H1 (cell line): ENCODE measurements at regions of chr17 and their contacts with region 1.

Region 1: DNA sequence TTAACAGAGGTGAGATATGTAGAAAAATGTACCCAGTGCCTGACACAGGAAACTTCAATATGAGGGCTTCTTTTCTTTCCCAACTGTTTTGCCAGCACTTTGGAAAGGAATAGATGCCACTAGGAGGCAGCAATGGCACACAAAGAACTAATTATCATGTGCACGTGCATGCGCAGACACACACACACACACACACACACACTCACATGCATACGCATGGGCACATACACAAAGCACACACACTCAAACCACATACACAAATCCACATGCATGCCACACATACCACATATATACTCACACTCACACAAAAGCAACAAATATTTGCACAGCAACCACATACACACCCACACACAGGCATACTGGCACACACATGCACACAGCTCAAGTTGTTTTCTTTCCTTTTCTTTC is 8.8 kb upstream of the CEP112 start:
- DNase-seq: peak in 1 of 2 experiments; percentile 52
- H3K4me3 ChIP-seq: no peak overlapping the region
- H3K27ac ChIP-seq: no peak overlapping the region
- H3K4me1 ChIP-seq: no peaks in the 10 kb centered on the region
- H3K27me3 ChIP-seq: no peaks in the 10 kb centered on the region; a peak in 1 of 7 replicates
- CTCF ChIP-seq: peak; percentile 3 to 83 (median 60)
- EP300 ChIP-seq: no peak
- POLR2A ChIP-seq: no peak
- RAD21 ChIP-seq: peak; percentile 87

Region 2: DNA sequence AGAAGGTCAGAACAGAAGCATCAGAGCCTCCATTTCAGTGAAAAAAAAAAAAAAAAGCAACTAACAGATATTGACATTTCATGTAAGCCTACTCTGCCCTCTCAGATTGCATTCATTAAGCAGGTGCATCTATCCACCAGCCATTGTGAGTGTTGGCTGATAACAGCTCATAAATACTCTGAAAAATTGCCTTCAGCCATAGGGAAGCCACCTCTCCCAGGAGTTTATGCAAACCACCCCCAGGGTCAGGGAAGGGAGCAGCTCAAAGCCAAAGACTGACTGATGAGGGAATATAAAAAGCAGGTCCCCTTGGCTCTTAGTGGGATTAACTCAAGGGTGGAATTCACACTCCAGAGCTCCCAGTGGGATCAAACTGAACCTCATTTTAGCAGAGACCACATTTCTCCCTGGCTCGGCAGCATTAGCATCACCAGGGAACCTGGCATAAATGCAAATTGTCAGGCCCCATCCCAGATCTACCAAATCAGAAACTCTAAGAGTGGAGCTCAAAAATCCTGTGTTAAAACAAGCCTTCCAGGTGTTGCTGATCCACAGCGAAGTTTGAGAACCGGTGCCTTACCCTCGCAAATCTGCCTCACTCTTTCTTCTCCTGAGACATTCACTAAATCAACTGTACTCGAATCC is 14.3 kb after region 1 on chr17:
- CTCF ChIA-PET with region 1: interaction called, 64 read pairs
- POLR2A ChIA-PET with region 1: no interaction called
- DNase-seq: no peak
- H3K4me3 ChIP-seq: no peak overlapping the region
- H3K27ac ChIP-seq: no peak overlapping the region
- H3K4me1 ChIP-seq: no peaks in the 10 kb centered on the region
- H3K27me3 ChIP-seq: no peaks in the 10 kb centered on the region
- CTCF ChIP-seq: no peak
- EP300 ChIP-seq: no peak
- POLR2A ChIP-seq: no peak
- RAD21 ChIP-seq: no peak

Region 3: DNA sequence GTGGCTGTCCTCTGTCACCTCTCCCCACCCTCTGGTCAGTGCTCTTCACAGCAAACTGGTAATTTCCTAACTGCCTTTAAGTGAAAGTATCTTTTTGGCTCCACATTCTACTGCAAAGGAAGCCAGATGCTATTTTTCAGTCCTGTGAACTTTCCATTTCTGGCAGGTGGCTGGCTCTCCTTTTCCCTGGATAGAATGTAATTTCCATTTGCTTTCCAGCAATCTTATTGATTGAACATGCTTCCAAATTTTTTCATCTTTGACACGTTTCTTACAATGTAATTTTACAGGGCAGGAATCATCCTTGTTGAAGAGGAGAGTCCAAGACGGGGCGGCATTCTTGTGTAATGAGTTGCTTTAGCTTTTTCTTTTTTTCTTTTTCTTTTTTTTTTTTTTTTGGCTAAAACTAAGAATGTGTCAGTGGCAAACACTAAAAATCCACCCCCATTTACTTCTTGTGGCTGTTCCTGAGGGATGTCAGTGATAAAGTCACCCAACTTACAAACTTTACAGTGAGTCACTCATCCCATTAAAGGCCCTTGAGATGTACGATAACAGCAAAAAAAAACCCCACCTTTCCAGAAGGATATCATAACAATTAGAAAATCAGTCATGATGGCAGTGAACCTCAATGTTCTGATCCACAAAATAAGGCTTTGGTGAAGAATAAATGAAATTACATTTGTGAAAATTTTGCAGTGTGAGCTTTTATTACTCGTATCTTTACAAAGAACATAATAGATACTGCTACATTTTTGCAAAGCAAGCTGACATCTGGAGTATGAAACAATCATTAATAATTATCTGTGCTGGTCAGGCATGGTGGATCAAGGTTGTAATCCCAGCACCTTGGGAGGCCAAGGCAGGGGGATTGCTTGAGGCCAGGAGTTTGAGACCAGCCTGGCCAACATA is 72.4 kb after region 1 on chr17:
- CTCF ChIA-PET with region 1: no interaction called
- POLR2A ChIA-PET with region 1: no interaction called
- DNase-seq: no peak
- H3K4me3 ChIP-seq: no peak overlapping the region
- H3K27ac ChIP-seq: no peak overlapping the region
- H3K4me1 ChIP-seq: no peaks in the 10 kb centered on the region
- H3K27me3 ChIP-seq: no peaks in the 10 kb centered on the region; a peak in 1 of 7 replicates
- CTCF ChIP-seq: no peak
- EP300 ChIP-seq: no peak
- POLR2A ChIP-seq: no peak
- RAD21 ChIP-seq: no peak